Ascending aorta (tissue), 2 donors: ENCODE measurements at regions of chr5 and their contacts with region 1.

Region 1: GRCh38 chr5:9046756-9047481 is 499.0 kb downstream of the SEMA5A start:
- DNase-seq: peak in 1 of 2 donors; percentile 74
- H3K4me3 ChIP-seq: no peak overlapping the region
- H3K27ac ChIP-seq: peak overlapping the region; percentile 48 to 53
- H3K4me1 ChIP-seq: peaks cover 0 to 15% of the 10 kb centered on the region in 2 donors
- H3K27me3 ChIP-seq: no peaks in the 10 kb centered on the region
- CTCF ChIP-seq: no peak

Region 2: DNA sequence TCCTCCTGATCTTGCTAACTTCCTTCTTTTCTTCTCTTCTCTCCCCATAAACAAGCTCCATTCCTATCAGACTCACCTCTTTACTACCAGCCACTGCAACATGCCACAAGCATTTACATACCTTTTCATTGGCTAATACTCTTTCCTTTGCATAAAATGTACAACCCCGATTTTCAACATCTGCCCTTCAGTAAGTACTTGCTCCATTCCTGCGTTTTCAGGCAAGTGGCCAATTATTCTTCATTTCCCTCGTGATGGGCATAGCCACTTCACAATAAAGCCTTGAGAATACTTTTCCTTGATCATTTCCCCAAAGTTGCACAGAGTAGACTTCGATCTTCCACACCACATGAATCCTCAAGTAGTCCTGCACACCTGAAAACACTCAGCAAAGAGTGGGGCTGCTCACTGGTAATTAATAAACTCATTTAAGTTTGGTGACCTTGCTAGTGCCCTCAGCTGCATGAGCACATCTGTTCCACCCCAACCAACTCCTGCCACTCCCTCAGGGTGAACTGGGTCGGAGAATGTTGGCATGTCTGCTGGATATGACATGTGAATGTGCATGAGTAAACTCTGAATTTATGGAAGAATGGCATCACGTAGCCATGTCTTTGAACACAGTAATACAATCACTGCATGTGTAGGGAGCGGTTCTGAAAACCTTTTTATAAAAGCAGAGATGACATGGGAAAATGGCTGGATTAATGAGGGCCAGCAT is 36.8 kb before region 1 on chr5:
- intact Hi-C with region 1: loop called (anchors 5 kb)
- DNase-seq: no peak
- H3K4me3 ChIP-seq: no peak overlapping the region
- H3K27ac ChIP-seq: no peak overlapping the region
- H3K4me1 ChIP-seq: peaks cover 0 to 8% of the 10 kb centered on the region in 2 donors
- H3K27me3 ChIP-seq: no peaks in the 10 kb centered on the region
- CTCF ChIP-seq: no peak